K562 (cell line): ENCODE measurements at regions of chr12 and their contacts with region 1.

Region 1: DNA sequence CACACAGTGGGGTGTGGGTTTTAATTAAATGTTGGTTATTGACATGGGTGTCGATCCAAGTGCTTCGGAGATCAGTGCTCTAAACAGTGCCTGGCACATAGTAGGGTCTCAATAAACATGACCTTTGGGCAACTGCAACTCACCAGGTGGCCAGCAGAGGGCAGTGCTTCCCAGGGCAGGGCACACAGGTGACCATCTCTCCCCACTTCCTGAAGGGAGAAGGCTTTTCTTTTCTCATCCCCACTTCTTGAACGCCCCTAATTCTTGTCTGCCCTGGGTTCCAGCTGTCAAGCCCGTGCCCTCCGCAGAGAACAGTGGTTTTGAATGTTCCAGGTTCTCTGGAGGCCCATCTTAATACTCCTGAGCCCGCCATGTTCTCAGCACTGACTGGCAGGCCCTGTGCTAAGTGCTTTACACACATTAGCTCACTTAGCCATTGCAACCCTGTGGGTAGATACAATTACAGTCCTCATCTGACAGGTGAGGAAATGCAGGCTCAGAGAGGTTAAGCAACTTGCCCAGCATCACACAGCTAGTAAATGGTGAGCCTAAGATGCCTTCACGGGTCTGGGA is 16.3 kb downstream of the RAPGEF3 start:
- DNase-seq: peak; percentile 71 to 76 (median 74)
- ATAC-seq: peak; percentile 57
- H3K4me3 ChIP-seq: no peak overlapping the region
- H3K27ac ChIP-seq: no peak overlapping the region
- H3K4me1 ChIP-seq: peaks cover 27 to 54% of the 10 kb centered on the region in 2 experiments
- H3K27me3 ChIP-seq: peaks cover 7 to 41% of the 10 kb centered on the region in 2 experiments
- CTCF ChIP-seq: peak; percentile 93 to 98 (median 97)
- EP300 ChIP-seq: no peak
- POLR2A ChIP-seq: no peak
- RAD21 ChIP-seq: peak; percentile 91 to 97

Region 2: GRCh38 chr12:47636908-47637780 is 105.2 kb before region 1 on chr12:
- CTCF ChIA-PET with region 1: no interaction called
- POLR2A ChIA-PET with region 1: no interaction called
- in situ Hi-C with region 1: no loop called
- intact Hi-C with region 1: no loop called
- DNase-seq: peak in 2 of 4 experiments; percentile 17 to 78
- ATAC-seq: peak; percentile 88
- H3K4me3 ChIP-seq: no peak overlapping the region
- H3K27ac ChIP-seq: peak overlapping the region; percentile 26; the same call in 1 of the 3 replicates
- H3K4me1 ChIP-seq: peaks cover 0 to 7% of the 10 kb centered on the region in 2 experiments; a peak in 2 of 5 replicates
- H3K27me3 ChIP-seq: no peaks in the 10 kb centered on the region
- CTCF ChIP-seq: peak; percentile 72 to 80 (median 78)
- EP300 ChIP-seq: no peak
- POLR2A ChIP-seq: no peak
- RAD21 ChIP-seq: peak in 1 of 2 experiments; percentile 56; a peak in 2 of 4 replicates

Region 3: DNA sequence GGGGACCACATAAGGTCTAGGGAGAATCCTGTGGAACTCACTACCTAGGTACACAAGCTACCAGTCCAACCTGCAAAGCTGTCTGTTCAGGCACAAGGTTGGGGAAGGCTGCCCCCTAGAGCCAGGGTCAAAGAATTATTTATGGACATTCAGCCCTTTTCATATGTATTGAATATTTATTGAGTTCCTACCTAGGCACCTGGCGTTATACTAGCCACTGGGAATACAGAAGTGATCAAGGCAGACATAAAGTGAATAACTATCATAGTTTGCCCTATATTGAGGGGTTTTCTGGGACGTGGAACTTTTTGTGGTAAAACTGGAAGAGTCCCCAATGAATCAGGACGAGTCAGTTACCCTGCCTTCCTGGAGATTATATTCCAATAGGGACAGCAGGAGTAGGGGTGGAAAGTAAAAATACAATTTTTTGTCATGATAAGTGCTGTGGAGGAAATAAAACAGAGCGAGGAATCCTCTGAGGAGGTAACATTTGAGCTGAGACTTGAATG is 24.9 kb after region 1 on chr12:
- CTCF ChIA-PET with region 1: interaction called, 17 read pairs
- POLR2A ChIA-PET with region 1: interaction called, 4 read pairs
- in situ Hi-C with region 1: no loop called
- intact Hi-C with region 1: loop called (anchors 2 kb)
- DNase-seq: peak; percentile 51 to 79 (median 58)
- ATAC-seq: peak; percentile 74
- H3K4me3 ChIP-seq: no peak overlapping the region
- H3K27ac ChIP-seq: no peak overlapping the region
- H3K4me1 ChIP-seq: peaks cover 15 to 30% of the 10 kb centered on the region in 2 experiments; a peak in 4 of 5 replicates
- H3K27me3 ChIP-seq: no peaks in the 10 kb centered on the region
- CTCF ChIP-seq: peak; percentile 75 to 87 (median 76)
- EP300 ChIP-seq: no peak
- POLR2A ChIP-seq: no peak
- RAD21 ChIP-seq: peak; percentile 58 to 77

Region 4: GRCh38 chr12:47773062-47773857 is 30.9 kb after region 1 on chr12 and contains the start of gene SLC48A1:
- CTCF ChIA-PET with region 1: interaction called, 42 read pairs
- POLR2A ChIA-PET with region 1: interaction called, 11 read pairs
- in situ Hi-C with region 1: no loop called
- intact Hi-C with region 1: no loop called
- DNase-seq: peak; percentile 84 to 95 (median 94)
- ATAC-seq: peak; percentile 81
- H3K4me3 ChIP-seq: peak within 1 kb of the TSS; percentile 83
- H3K27ac ChIP-seq: peak within 1 kb of the TSS; percentile 92
- H3K4me1 ChIP-seq: peaks cover 53 to 67% of the 10 kb centered on the region in 2 experiments
- H3K27me3 ChIP-seq: no peaks in the 10 kb centered on the region
- CTCF ChIP-seq: peak in 2 of 3 experiments; percentile 52 to 71; a peak in 4 of 6 replicates
- EP300 ChIP-seq: no peak
- POLR2A ChIP-seq: peak; percentile 51; the same call in 1 of the 2 replicates
- RAD21 ChIP-seq: no peak
- polyA plus RNA-seq, gene SLC48A1: 23.5 to 26.9 TPM

Region 5: DNA sequence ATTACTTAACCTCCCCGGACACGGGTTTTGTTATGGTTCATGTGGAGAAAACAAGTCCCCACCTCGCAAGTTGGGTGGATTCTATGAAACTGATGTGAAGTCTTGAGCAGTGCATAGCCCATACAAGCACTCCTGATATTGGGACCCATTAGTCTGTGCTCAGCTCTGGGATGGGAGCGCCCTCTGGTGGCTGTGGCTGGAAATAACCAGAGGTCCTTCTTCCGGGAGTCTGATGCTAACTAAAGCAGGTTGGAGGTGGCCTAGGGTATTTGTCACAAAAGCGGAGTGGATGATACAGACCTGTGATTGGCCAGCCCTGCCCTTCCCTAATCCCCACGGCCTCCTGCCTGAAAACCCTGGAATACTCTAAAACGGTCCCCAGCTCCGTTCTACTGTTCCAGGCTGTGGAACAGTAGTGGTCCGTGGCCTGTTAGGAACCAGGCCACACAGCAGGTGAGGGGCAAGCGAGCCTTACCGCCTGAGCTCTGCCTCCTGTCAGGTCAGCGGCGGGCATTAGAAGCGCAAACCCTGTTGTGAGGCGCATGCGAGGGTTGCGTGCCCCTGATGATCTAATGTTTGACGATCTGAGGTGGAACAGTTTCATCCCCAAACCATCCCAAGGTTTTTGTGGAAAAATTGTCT is 37.1 kb after region 1 on chr12:
- CTCF ChIA-PET with region 1: interaction called, 42 read pairs
- POLR2A ChIA-PET with region 1: interaction called, 11 read pairs
- in situ Hi-C with region 1: no loop called
- intact Hi-C with region 1: loop called (anchors 1 kb)
- DNase-seq: peak; percentile 71 to 92 (median 76)
- ATAC-seq: peak; percentile 75
- H3K4me3 ChIP-seq: no peak overlapping the region
- H3K27ac ChIP-seq: no peak overlapping the region
- H3K4me1 ChIP-seq: peaks cover 47 to 78% of the 10 kb centered on the region in 2 experiments
- H3K27me3 ChIP-seq: no peaks in the 10 kb centered on the region
- CTCF ChIP-seq: peak; percentile 90 to 97 (median 95)
- EP300 ChIP-seq: peak; percentile 13; the same call in 1 of the 2 replicates
- POLR2A ChIP-seq: no peak
- RAD21 ChIP-seq: peak; percentile 89 to 94